Calu3 (cell line): ENCODE measurements at regions of chr3 and their contacts with region 1.

Region 1: DNA sequence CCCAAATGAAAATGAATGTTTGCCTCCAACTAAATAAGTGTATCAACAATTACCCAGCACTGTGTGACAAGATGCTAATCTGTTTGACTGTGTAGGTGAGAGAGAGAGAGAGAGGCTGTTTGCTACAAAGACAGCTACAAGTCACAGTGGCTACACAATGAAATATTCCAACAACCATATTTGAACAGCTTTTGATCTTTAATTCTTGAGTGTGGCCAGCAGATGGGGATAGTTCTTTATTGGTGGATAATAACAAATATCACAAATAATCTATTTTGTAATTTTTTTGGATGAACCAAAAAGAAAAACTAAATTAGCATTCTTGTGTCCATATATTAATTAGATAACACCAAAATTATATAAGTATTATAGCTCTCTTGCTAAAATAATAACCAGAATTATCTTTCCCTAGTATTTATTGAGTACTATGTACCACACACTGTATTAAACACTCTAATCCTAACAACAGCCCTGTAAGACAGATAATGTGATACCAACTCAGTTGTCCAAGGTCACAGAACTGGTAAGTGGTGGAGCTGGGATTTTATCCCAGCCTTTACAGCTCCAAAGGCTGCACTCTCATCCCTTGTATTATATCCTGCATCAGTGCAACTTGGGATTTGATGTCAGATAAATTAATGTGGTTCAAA is 61.9 kb upstream of the C3orf80 start:
- DNase-seq: peak; percentile 27
- H3K4me3 Mint-ChIP-seq: no peak overlapping the region
- H3K27ac Mint-ChIP-seq: no peak overlapping the region
- H3K4me1 Mint-ChIP-seq: peaks cover 8% of the 10 kb centered on the region
- H3K27me3 Mint-ChIP-seq: no peaks in the 10 kb centered on the region
- CTCF ChIP-seq: no peak

Region 2: GRCh38 chr3:160225176-160226025 is 62.0 kb after region 1 on chr3 and contains the start of gene C3orf80:
- CTCF ChIA-PET with region 1: interaction called, 7 read pairs
- intact Hi-C with region 1: loop called (anchors 5 kb)
- DNase-seq: peak; percentile 81
- H3K4me3 Mint-ChIP-seq: peak within 1 kb of the TSS; percentile 85
- H3K27ac Mint-ChIP-seq: peak within 1 kb of the TSS; percentile 59
- H3K4me1 Mint-ChIP-seq: peaks cover 9% of the 10 kb centered on the region
- H3K27me3 Mint-ChIP-seq: peaks cover 13% of the 10 kb centered on the region
- CTCF ChIP-seq: no peak
- total RNA-seq, gene C3orf80: 2.5 and 3.0 TPM in 2 replicates

Region 3: GRCh38 chr3:160343132-160343531 is 179.8 kb after region 1 on chr3:
- CTCF ChIA-PET with region 1: interaction called, 8 read pairs
- intact Hi-C with region 1: loop called (anchors 1 kb)
- DNase-seq: no peak
- H3K4me3 Mint-ChIP-seq: no peak overlapping the region
- H3K27ac Mint-ChIP-seq: no peak overlapping the region
- H3K4me1 Mint-ChIP-seq: no peaks in the 10 kb centered on the region
- H3K27me3 Mint-ChIP-seq: no peaks in the 10 kb centered on the region
- CTCF ChIP-seq: peak; percentile 46

Region 4: GRCh38 chr3:160413613-160414248 is 250.4 kb after region 1 on chr3:
- CTCF ChIA-PET with region 1: interaction called, 9 read pairs
- intact Hi-C with region 1: loop called (anchors 1 kb)
- DNase-seq: peak; percentile 89
- H3K4me3 Mint-ChIP-seq: no peak overlapping the region
- H3K27ac Mint-ChIP-seq: no peak overlapping the region
- H3K4me1 Mint-ChIP-seq: peaks cover 27% of the 10 kb centered on the region
- H3K27me3 Mint-ChIP-seq: no peaks in the 10 kb centered on the region
- CTCF ChIP-seq: peak; percentile 89

Region 5: DNA sequence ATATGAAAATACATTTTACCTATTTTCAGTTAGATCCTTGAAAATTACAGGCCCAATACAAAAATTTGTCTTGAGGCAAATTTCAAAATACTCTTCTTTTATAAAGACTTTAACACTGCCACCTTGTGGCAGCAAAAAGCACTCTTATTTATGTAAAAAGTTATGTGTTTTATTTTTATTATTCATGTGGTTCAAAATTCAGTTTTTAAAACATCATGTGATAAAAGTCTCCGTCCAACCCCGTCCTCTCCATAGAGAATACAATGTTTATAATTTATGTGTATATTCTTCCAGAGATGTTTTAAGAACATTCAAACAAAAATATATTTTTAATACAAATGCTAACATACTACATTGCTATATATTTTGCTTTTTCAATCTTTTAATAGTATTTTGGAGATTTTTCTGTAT is 323.1 kb after region 1 on chr3:
- CTCF ChIA-PET with region 1: interaction called, 9 read pairs
- intact Hi-C with region 1: loop called (anchors 1 kb)
- DNase-seq: peak; percentile 19
- H3K4me3 Mint-ChIP-seq: peak overlapping the region; percentile 70
- H3K27ac Mint-ChIP-seq: no peak overlapping the region
- H3K4me1 Mint-ChIP-seq: peaks cover 12% of the 10 kb centered on the region
- H3K27me3 Mint-ChIP-seq: no peaks in the 10 kb centered on the region
- CTCF ChIP-seq: peak; percentile 73